Activated CD4-positive, alpha-beta T cell treated with anti-CD3 and anti-CD28 coated beads, Interleukin-2, amount 10 ng/mL, durations not matched to agents 7 days and 5 days (primary cell): ENCODE measurements at regions of chr19 and their contacts with region 1.

Region 1: GRCh38 chr19:42529248-42529764 is 1.0 kb upstream of the CEACAM1 start:
- DNase-seq: peak; percentile 76
- H3K4me3 Mint-ChIP-seq: peak overlapping the region; percentile 77
- H3K27ac Mint-ChIP-seq: peak overlapping the region; percentile 87
- H3K4me1 Mint-ChIP-seq: peaks cover 43% of the 10 kb centered on the region
- H3K27me3 Mint-ChIP-seq: no peaks in the 10 kb centered on the region

Region 2: DNA sequence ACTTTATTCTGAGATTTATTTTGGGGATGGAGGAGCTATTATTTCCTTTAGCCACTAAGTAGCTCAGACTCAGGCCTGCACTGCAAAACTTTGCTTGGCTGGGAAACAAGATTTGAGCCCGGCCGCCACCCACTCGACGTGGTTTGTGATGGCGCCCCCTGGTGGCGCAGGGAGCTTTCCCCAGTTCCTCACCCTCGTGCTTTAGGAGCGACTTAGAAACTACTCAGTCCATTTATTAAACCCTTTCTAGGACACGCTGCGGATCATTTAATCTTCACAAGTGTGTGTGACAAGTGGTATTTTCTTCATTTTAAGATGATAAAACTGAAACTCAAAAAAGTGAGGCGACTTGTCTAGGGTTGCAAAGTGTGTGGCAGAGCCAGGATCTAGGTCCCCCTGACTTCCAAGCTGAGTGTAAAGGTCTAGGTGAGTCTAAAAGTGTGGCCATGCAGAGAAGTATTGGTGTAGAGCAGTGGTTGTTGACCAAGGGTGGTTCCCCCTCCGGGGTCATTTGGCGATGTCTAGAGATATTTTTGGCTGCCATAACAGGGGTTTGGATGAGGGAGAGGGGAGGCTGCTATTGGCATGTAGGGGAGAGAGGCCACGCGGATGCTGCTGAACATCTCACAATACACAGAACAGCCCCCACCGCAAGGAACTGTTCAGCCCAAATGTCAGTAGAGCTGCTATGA is 88.8 kb before region 1 on chr19:
- CTCF ChIA-PET with region 1: interaction called, 30 read pairs
- POLR2A ChIA-PET with region 1: no interaction called
- DNase-seq: peak; percentile 83
- H3K4me3 Mint-ChIP-seq: no peak overlapping the region
- H3K27ac Mint-ChIP-seq: no peak overlapping the region
- H3K4me1 Mint-ChIP-seq: peaks cover 33% of the 10 kb centered on the region
- H3K27me3 Mint-ChIP-seq: peaks cover 2% of the 10 kb centered on the region

Region 3: DNA sequence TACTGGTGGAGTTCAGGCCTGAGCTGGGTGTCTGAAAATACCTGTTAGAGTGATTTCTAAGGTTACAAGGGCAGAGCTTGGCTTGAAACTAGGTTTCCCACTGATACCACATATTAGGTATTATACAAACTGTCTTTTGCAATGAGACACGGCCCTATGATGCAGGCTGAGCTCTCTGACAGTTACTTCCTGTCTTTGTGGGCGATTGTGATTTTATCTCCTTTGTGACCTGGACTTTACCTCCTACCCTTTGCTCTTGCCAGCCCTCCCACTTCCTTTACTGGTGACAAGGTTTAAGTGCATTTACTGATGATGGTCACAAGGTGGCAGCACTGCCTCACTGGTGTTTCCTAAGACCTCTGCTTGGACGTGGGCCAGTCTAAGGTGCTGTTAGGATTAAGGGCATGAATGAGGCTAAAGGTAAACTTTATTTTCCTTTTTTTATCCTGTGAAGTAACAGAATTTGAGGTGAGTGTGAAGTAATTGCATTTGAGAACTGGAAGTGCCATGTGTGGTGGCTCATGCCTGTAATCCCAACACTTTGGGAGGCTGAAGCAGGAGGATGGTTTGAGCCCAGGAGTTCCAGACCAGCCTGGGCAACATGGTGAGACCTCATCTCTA is 78.9 kb before region 1 on chr19:
- CTCF ChIA-PET with region 1: interaction called, 31 read pairs
- POLR2A ChIA-PET with region 1: interaction called, 4 read pairs
- DNase-seq: peak; percentile 89
- H3K4me3 Mint-ChIP-seq: no peak overlapping the region
- H3K27ac Mint-ChIP-seq: no peak overlapping the region
- H3K4me1 Mint-ChIP-seq: peaks cover 25% of the 10 kb centered on the region
- H3K27me3 Mint-ChIP-seq: peaks cover 12% of the 10 kb centered on the region

Region 4: DNA sequence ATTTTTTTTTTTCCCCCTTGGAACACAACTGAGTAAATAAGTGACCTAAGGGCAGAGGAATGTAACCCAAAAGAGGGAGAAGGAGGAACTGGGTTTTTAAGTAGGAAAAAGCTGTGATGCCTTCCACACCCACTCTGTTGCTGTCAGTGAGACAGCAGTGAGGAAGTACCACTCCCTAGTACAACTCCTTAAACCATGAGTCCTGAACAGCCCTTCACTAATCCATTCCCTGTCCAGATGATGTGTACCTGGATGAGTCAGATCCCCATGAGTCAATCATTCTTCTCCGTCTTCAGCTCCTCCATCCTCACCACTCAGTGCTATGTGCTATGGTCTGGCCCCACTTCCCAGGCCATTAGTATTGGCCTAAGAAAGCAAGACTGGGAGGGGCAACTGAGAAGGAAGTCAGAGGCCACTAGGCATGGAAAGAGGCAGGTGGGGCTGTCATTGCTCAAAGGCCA is 73.7 kb before region 1 on chr19:
- CTCF ChIA-PET with region 1: interaction called, 31 read pairs
- POLR2A ChIA-PET with region 1: interaction called, 6 read pairs
- DNase-seq: no peak
- H3K4me3 Mint-ChIP-seq: no peak overlapping the region
- H3K27ac Mint-ChIP-seq: no peak overlapping the region
- H3K4me1 Mint-ChIP-seq: peaks cover 33% of the 10 kb centered on the region
- H3K27me3 Mint-ChIP-seq: peaks cover 15% of the 10 kb centered on the region

Region 5: DNA sequence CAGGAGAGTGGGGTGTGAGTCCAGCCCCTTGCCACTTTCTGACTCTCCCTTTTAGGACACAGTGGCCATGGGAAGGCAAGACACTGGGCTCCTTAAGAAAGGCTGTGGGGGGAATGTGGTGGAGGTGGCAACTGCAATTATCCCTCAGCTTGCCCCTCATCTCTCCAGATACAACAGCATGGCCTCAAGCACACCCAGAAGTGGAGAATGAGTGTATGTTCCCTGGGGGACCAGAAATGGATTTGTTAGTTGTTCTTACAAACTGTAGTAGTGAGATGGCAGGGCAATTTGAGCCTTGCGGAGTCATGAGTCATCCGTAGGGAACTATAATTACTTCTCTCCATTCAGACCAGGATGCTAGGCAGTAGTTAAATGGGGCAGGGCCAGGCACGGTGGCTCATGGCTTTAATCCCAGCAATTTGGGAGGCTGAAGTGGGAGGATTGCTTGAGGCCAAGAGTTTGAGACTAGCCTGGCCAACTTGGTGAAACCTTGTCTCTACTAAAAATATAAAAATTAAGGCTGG is 61.0 kb before region 1 on chr19:
- CTCF ChIA-PET with region 1: interaction called, 12 read pairs
- POLR2A ChIA-PET with region 1: no interaction called
- DNase-seq: no peak
- H3K4me3 Mint-ChIP-seq: no peak overlapping the region
- H3K27ac Mint-ChIP-seq: no peak overlapping the region
- H3K4me1 Mint-ChIP-seq: peaks cover 25% of the 10 kb centered on the region
- H3K27me3 Mint-ChIP-seq: peaks cover 1% of the 10 kb centered on the region